Sigmoid colon (tissue), 7 donors: ENCODE measurements at regions of chr1 and their contacts with region 1.

Region 1: DNA sequence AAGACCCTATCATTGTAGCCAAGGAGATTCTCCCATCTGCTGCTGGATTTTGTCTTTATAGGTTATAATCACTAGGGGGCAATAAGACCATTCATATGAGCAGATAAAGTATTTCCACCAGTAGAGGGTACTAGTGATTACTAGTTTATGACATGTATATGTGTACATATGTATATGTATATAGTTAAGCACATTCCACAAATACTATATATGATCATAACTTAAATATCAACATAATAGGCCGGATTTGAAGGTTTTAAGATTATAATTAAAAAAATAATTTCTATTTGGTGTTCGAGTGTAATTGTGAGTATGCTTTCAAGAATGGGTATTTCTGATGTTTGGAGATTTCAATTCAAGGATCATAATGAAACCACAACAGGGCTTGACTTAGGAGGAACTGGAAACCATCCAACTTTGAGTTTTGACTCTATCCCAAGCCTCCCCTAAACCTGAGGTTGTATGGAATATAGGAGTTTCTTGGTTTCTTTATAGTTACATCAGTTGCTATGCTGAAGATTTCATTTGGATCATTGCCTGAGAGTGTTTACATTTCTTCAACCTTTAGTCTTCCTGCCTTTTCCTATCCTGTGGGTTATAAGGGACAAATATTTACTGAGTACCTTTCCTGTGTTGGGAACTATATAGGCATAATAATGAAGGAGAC is 16.9 kb downstream of the TCEANC2 start:
- DNase-seq: no peak
- H3K4me3 ChIP-seq: no peak overlapping the region
- H3K27ac ChIP-seq: no peak overlapping the region
- H3K4me1 ChIP-seq: no peaks in the 10 kb centered on the region
- H3K27me3 ChIP-seq: no peaks in the 10 kb centered on the region
- CTCF ChIP-seq: peak; percentile 20 to 64 (median 61)
- EP300 ChIP-seq: no peak
- POLR2A ChIP-seq: no peak

Region 2: DNA sequence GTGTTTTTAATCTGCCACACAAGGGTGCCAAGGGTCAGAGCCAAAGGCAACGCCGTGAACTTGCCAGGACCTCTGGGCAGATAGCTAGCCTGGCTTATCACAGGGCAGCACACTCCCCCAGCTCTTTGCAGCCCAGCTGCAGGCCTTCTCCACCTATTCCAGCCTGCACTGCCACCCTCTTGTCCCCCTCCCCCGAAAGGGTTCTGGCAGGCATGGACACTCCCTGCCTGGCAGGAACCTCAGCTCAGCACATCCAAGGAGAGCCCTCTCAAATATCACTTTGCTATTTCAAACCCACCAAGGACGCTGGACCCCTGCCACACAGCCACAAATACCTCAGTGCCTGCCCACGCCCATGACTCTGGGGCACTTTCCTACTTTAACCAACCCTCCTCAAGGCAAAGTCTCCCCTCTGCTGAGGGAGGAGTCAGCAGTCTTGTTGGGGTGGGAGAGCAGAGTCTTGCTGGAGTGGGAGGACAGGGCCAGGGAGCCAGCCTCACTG is 326.8 kb after region 1 on chr1:
- intact Hi-C with region 1: loop called (anchors 5 kb)
- DNase-seq: no peak
- H3K4me3 ChIP-seq: no peak overlapping the region
- H3K27ac ChIP-seq: peak overlapping the region; percentile 34 to 57 (median 44)
- H3K4me1 ChIP-seq: peaks cover 0 to 45% (median 28%) of the 10 kb centered on the region in 4 donors
- H3K27me3 ChIP-seq: no peaks in the 10 kb centered on the region
- CTCF ChIP-seq: no peak
- EP300 ChIP-seq: no peak
- POLR2A ChIP-seq: no peak

Region 3: DNA sequence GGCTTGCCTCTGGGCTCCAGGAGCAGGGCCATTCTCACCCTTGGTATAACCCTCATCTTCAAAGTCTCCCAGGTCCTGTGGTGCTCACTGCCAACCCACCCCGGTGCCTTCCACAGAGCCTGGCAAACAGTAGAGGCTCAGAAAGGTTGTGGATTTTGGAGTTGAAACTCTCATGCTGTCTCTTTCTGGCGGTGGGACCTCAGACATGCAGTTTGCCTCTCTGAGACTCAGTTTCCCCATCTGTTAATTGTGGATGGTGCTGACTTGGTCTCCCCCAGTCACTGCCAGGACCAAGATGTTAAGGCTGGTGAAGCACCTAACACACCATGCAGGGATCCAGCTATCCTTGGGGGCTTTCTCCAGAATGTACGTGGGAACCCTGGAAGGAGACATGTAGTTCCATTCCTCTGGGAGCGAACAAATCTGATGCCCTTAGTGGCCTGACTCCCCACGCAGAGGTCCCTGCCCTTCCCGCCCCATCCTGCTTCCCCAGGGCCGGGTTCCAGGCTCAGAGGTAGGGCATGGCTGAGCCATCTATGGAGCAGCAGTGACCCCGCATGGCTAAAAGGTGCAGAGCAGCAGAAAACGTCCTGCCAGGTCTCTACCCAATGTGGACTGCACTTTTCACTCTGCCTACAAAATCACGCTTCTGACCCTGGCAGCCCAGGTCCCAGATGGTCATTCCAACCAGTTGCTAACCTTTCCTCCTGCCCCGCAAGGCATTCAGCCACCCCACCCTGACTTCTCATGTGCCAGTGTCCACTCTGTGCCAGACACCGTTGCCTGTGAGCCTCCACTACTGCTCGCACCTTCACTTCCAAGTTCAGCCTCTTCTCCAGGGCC is 740.0 kb after region 1 on chr1:
- intact Hi-C with region 1: loop called (anchors 5 kb)
- DNase-seq: no peak
- H3K4me3 ChIP-seq: no peak overlapping the region
- H3K27ac ChIP-seq: no peak overlapping the region
- H3K4me1 ChIP-seq: peaks cover 0 to 5% (median 4%) of the 10 kb centered on the region in 4 donors
- H3K27me3 ChIP-seq: peaks cover 0 to 4% (median 0%) of the 10 kb centered on the region in 3 donors
- CTCF ChIP-seq: peak; percentile 62 to 84 (median 78)
- EP300 ChIP-seq: no peak
- POLR2A ChIP-seq: no peak